Ovary (tissue), 10 donors: ENCODE measurements at regions of chr2 and their contacts with region 1.

Region 1: GRCh38 chr2:8906208-8906607 is 68.8 kb upstream of the KIDINS220 start:
- DNase-seq: no peak
- H3K4me3 ChIP-seq: no peak overlapping the region
- H3K27ac ChIP-seq: no peak overlapping the region
- H3K4me1 ChIP-seq: no peaks in the 10 kb centered on the region
- H3K27me3 ChIP-seq: no peaks in the 10 kb centered on the region
- CTCF ChIP-seq: no peak
- EP300 ChIP-seq: no peak
- POLR2A ChIP-seq: no peak

Region 2: GRCh38 chr2:8169443-8169842 is 736.8 kb before region 1 on chr2:
- intact Hi-C with region 1: no loop called
- DNase-seq: no peak
- H3K4me3 ChIP-seq: no peak overlapping the region
- H3K27ac ChIP-seq: no peak overlapping the region
- H3K4me1 ChIP-seq: peaks cover 20% of the 10 kb centered on the region
- H3K27me3 ChIP-seq: no peaks in the 10 kb centered on the region
- CTCF ChIP-seq: no peak
- EP300 ChIP-seq: no peak
- POLR2A ChIP-seq: no peak

Region 3: GRCh38 chr2:8851811-8852560 is 54.2 kb before region 1 on chr2:
- intact Hi-C with region 1: no loop called
- DNase-seq: no peak
- H3K4me3 ChIP-seq: no peak overlapping the region
- H3K27ac ChIP-seq: no peak overlapping the region
- H3K4me1 ChIP-seq: no peaks in the 10 kb centered on the region
- H3K27me3 ChIP-seq: no peaks in the 10 kb centered on the region
- CTCF ChIP-seq: no peak
- EP300 ChIP-seq: no peak
- POLR2A ChIP-seq: no peak

Region 4: GRCh38 chr2:9112079-9112721 is 206.0 kb after region 1 on chr2:
- intact Hi-C with region 1: loop called in 1 of 4 experiments (anchors 10 kb)
- DNase-seq: peak; percentile 81 to 85 (median 83)
- H3K4me3 ChIP-seq: no peak overlapping the region
- H3K27ac ChIP-seq: peak overlapping the region in 1 of 2 donors; percentile 42
- H3K4me1 ChIP-seq: peaks cover 5% of the 10 kb centered on the region
- H3K27me3 ChIP-seq: no peaks in the 10 kb centered on the region
- CTCF ChIP-seq: no peak
- EP300 ChIP-seq: no peak
- POLR2A ChIP-seq: no peak